Mammary epithelial cell (primary cell): ENCODE measurements at regions of chr5 and their contacts with region 1.

Region 1: GRCh38 chr5:31639481-31640411 is 815 bp downstream of the PDZD2 start:
- DNase-seq: no peak
- H3K4me3 ChIP-seq: peak overlapping the region in 2 of 3 experiments; percentile 49 to 56
- H3K27ac ChIP-seq: no peak overlapping the region
- H3K4me1 ChIP-seq: peaks cover 9% of the 10 kb centered on the region
- H3K27me3 ChIP-seq: peaks cover 13% of the 10 kb centered on the region
- CTCF ChIP-seq: no peak

Region 2: DNA sequence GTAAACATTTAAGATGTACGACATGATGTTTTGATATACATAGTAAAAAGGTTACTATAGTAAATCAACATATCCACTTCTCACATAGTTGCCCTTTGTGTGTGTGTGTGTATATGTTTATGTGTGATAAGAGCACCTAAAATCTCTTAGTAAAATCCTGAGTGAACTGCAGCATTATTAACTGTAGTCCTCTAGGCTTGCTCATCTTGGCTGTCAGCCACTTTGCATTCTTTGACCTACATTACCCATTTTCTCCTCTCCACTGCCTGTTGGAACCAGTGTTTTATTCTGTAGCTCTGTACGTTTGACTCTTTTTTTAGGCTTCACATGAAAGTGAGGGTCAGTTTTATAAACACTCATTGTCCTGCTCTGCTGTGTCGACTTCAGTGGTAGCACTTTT is 83.3 kb before region 1 on chr5:
- CTCF ChIA-PET with region 1: no interaction called
- dilution Hi-C with region 1: no loop called
- in situ Hi-C with region 1: no loop called
- intact Hi-C with region 1: no loop called
- DNase-seq: peak; percentile 5
- H3K4me3 ChIP-seq: no peak overlapping the region
- H3K27ac ChIP-seq: no peak overlapping the region
- H3K4me1 ChIP-seq: peaks cover 6% of the 10 kb centered on the region
- H3K27me3 ChIP-seq: no peaks in the 10 kb centered on the region
- CTCF ChIP-seq: no peak

Region 3: DNA sequence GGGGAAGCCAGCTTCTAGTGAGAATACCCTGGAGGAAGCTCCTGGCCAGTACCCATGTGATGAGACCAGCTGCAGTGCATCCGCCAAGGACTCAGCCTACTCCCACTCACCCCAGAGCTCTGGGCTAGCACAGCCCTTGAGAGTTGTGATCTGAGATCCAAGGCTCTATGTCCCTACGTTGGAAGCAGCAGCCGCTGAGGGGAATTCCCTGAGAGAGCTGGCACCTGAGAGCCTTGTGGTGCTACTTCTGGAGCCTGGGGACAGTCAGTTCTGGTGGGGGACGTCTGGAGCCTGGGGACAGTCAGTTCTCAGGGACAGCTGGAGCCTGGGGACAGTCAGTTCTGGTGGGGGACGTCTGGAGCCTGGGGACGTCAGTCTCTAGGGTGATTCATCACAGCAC is 38.4 kb after region 1 on chr5:
- CTCF ChIA-PET with region 1: no interaction called
- dilution Hi-C with region 1: loop called (anchors 5 kb)
- in situ Hi-C with region 1: no loop called
- intact Hi-C with region 1: no loop called
- DNase-seq: no peak
- H3K4me3 ChIP-seq: no peak overlapping the region
- H3K27ac ChIP-seq: no peak overlapping the region
- H3K4me1 ChIP-seq: no peaks in the 10 kb centered on the region
- H3K27me3 ChIP-seq: no peaks in the 10 kb centered on the region
- CTCF ChIP-seq: no peak

Region 4: GRCh38 chr5:31702709-31703108 is 63.0 kb after region 1 on chr5:
- CTCF ChIA-PET with region 1: no interaction called
- dilution Hi-C with region 1: no loop called
- in situ Hi-C with region 1: no loop called
- intact Hi-C with region 1: no loop called
- DNase-seq: no peak
- H3K4me3 ChIP-seq: no peak overlapping the region
- H3K27ac ChIP-seq: no peak overlapping the region
- H3K4me1 ChIP-seq: no peaks in the 10 kb centered on the region
- H3K27me3 ChIP-seq: no peaks in the 10 kb centered on the region
- CTCF ChIP-seq: no peak

Region 5: GRCh38 chr5:31770998-31771397 is 131.3 kb after region 1 on chr5:
- CTCF ChIA-PET with region 1: no interaction called
- dilution Hi-C with region 1: no loop called
- in situ Hi-C with region 1: no loop called
- intact Hi-C with region 1: no loop called
- DNase-seq: no peak
- H3K4me3 ChIP-seq: no peak overlapping the region
- H3K27ac ChIP-seq: no peak overlapping the region
- H3K4me1 ChIP-seq: no peaks in the 10 kb centered on the region
- H3K27me3 ChIP-seq: no peaks in the 10 kb centered on the region
- CTCF ChIP-seq: no peak